MCF 10A (cell line): ENCODE measurements at regions of chr13 and their contacts with region 1.

Region 1: DNA sequence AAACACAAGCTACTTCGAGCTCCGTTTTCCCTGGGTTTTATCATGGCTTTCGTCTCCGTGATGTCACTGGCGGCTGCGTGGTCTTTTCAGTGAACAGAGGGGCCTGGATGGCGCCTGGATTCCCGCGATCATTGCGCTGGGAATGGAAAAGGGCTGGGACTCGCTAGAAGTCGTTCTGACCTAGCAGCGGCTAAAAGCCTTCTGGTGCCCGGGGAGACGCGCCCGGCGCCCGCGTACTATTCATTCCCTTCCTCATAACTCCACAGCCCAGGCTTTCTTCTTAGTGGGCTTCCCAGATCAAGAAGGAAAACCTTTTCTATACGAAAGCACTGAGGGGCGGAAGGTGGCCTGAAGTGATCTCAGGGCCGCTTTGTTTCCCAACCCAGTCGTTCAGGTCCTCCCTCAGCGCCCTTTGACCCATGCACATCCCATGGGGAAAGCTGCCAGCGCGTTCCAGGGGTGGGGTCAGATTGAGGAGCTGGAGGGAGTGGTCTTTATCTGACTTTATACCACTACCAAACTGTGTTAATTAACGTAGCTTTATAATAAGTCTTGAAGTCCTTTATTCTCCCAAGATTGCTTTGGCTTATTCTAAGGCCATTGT is 96.6 kb downstream of the ELF1 start:
- DNase-seq: no peak
- H3K4me3 Mint-ChIP-seq: peak overlapping the region; percentile 87
- H3K27ac Mint-ChIP-seq: peak overlapping the region; percentile 35
- H3K4me1 Mint-ChIP-seq: peaks cover 9% of the 10 kb centered on the region
- H3K27me3 Mint-ChIP-seq: no peaks in the 10 kb centered on the region
- CTCF ChIP-seq: no peak

Region 2: GRCh38 chr13:39684531-39685137 is 1237.9 kb before region 1 on chr13:
- CTCF ChIA-PET with region 1: no interaction called
- POLR2A ChIA-PET with region 1: no interaction called
- intact Hi-C with region 1: loop called (anchors 10 kb)
- DNase-seq: peak; percentile 39
- H3K4me3 Mint-ChIP-seq: no peak overlapping the region
- H3K27ac Mint-ChIP-seq: no peak overlapping the region
- H3K4me1 Mint-ChIP-seq: no peaks in the 10 kb centered on the region
- H3K27me3 Mint-ChIP-seq: no peaks in the 10 kb centered on the region
- CTCF ChIP-seq: peak; percentile 18

Region 3: DNA sequence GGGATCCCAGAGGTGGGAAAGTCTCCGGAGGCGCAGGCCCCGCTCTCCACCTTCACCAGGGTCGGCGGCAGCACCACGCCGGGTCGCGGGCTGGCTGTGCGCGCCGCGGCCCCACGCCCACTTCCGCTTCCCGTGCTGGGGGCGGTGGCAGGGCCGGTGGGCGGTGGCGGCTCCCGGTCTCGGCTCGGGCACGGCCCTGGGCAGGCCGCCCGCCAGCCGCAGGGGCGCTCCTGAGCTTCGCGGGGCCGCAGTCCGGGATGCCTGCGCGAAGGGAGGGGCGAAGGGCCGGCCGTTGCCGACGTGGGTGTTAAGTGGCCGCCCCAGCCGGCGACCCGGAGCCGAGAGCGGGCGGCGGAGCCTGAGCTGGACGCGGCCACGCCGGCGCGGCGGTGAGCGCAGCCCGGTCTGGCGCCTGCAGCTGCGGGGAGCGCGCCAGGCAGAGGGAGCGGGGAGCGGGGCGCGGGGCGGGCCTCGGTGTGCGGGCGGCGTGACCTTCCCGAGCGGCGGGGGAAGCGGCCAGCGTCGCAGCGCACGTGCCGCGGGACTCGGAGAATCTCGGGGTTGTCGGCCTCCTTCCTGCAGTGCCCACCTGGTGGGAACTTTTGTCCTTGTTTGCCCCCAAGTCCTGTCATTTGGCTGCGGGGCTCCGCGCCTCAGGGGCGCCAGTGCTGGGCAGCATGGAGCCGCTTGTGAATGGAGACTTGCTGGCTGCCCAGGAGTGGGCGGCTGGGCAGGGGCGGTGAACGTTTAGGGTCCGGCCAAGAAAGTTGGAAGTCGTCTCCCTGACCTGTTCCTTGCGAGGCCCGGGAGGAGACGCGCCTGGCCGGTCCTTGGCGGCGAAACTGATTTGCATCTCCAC is 133.0 kb before region 1 on chr13 and contains the start of gene SLC25A15:
- CTCF ChIA-PET with region 1: interaction called, 4 read pairs
- POLR2A ChIA-PET with region 1: interaction called, 10 read pairs
- intact Hi-C with region 1: loop called (anchors 5 kb)
- DNase-seq: peak; percentile 84
- H3K4me3 Mint-ChIP-seq: peak within 1 kb of the TSS; percentile 75
- H3K27ac Mint-ChIP-seq: no peak within 1 kb of the TSS
- H3K4me1 Mint-ChIP-seq: no peaks in the 10 kb centered on the region
- H3K27me3 Mint-ChIP-seq: no peaks in the 10 kb centered on the region
- CTCF ChIP-seq: peak; percentile 10
- total RNA-seq, gene SLC25A15: 14.3 and 15.5 TPM in 2 replicates